Sigmoid colon (tissue), 7 donors: ENCODE measurements at regions of chr11 and their contacts with region 1.

Region 1: GRCh38 chr11:119101759-119102423 is at the start of gene DPAGT1:
- DNase-seq: peak; percentile 97
- H3K4me3 ChIP-seq: peak within 1 kb of the TSS; percentile 77 to 82 (median 78)
- H3K27ac ChIP-seq: peak within 1 kb of the TSS; percentile 84 to 92 (median 90)
- H3K4me1 ChIP-seq: peaks cover 0 to 36% (median 32%) of the 10 kb centered on the region in 4 donors
- H3K27me3 ChIP-seq: no peaks in the 10 kb centered on the region
- CTCF ChIP-seq: peak in 1 of 4 experiments; percentile 1
- EP300 ChIP-seq: no peak
- POLR2A ChIP-seq: peak in 1 of 2 donors; percentile 37
- total RNA-seq, gene DPAGT1: 16.1 to 22.1 (median 16.8) TPM

Region 2: DNA sequence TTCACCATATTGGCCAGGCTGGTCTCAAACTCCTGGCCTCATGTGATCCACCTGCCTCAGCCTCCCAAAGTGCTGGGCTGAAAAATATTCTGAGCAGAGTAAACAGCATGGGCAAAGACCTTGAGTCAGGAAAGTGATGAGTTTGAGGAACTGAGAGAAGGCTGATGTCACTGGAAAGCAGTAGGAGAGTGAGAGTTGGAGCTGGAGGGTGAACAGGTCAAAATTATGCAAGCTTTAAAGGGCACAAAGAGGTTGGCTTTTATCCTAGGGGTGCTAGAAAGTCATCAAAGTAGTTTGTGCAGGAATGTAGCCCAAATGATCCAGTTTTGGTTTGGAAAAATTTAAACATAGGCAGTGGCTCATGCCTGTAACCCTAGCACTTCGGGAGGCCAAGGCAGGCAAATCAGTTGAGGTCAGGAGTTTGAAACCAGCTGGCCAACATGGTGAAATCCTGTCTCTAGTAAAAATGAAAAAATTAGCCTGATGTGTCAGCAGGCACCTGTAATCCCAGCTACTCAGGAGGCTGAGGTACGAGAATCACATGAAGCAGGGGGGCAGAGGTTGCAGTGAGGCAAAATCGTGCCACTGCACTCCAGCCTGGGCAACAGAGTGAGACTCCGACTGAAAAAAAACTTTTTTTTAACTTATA is 262.9 kb before region 1 on chr11:
- intact Hi-C with region 1: no loop called
- DNase-seq: no peak
- H3K4me3 ChIP-seq: no peak overlapping the region
- H3K27ac ChIP-seq: no peak overlapping the region
- H3K4me1 ChIP-seq: peaks cover 0 to 17% (median 13%) of the 10 kb centered on the region in 4 donors
- H3K27me3 ChIP-seq: no peaks in the 10 kb centered on the region
- CTCF ChIP-seq: no peak
- EP300 ChIP-seq: no peak
- POLR2A ChIP-seq: no peak

Region 3: DNA sequence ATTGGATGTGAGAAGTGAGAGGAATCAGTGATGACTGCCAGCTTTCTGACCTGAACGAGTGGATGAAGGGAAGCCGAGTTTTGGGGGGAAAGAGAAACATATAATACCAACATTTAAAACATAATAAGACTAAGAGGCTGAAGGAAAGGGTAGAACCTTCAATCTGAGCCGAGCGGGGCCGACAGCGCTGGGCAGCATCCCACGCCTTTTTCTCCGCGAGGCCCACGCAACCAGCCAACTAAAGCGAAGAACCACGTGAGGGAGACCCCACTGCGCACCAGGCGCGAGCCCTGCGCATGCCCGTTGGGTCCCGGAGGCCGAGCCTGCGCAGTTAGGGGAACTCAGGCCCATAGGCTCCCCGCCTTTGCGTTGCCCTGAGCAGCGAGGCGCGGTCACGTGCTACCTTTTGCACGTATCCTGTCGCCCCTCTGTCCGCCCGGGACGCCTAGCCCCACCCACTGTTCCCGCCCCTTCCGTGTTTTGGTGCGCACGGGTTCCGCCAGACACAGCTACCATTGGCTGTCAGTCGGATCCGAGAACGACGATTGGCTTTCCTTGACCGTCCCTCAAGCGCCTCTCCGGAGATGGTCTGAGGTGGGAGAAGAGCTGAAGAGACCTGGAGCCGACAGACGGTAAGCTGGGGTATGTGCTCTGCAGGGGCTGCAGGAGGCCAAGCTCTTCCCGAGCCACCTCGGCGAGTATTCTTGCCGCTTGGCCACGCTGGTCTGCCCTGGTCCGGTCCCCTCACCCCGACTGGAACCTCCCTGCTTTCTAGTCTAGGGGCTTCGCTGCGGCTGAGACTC is 19.3 kb after region 1 on chr11 and contains the start of gene HINFP:
- intact Hi-C with region 1: loop called (anchors 2 kb)
- DNase-seq: peak; percentile 100
- H3K4me3 ChIP-seq: peak within 1 kb of the TSS; percentile 68 to 88 (median 80)
- H3K27ac ChIP-seq: peak within 1 kb of the TSS; percentile 84 to 90 (median 84)
- H3K4me1 ChIP-seq: peaks cover 0 to 19% (median 17%) of the 10 kb centered on the region in 4 donors
- H3K27me3 ChIP-seq: no peaks in the 10 kb centered on the region
- CTCF ChIP-seq: no peak
- EP300 ChIP-seq: no peak
- POLR2A ChIP-seq: peak; percentile 64 to 70
- total RNA-seq, gene HINFP: 15.0 to 33.0 (median 21.2) TPM